ENCODE measurements at regions of chr19 and their contacts with region 1.

Region 1: GRCh38 chr19:20661150-20661819 is at the start of gene ZNF626:
- DNase-seq: peak; percentile 96
- ATAC-seq: peak; percentile 99
- H3K4me3 Mint-ChIP-seq: peak within 1 kb of the TSS; percentile 92
- H3K27ac Mint-ChIP-seq: peak within 1 kb of the TSS; percentile 95
- H3K4me1 Mint-ChIP-seq: peaks cover 33% of the 10 kb centered on the region
- H3K27me3 Mint-ChIP-seq: no peaks in the 10 kb centered on the region
- total RNA-seq, gene ZNF626: 8.0 to 13.3 TPM

Region 2: DNA sequence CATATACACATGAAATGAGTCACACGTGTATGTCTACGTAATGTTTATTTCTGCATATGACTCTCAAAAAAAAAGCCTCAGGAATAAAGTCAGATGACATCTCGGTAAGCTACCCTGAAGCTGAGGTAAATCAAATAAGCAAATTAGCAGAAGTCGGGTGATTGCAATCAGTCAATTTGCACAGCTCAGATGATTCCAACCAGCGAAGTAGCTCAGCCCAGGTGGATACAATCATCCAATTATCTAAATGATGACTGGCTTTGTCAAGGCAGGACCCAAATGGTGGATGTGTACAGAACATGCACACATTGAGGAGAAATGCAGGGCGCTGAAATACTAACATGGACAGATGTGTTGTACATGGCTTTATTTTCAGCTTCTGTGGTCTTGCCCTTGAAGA is 345.7 kb before region 1 on chr19:
- CTCF ChIA-PET with region 1: no interaction called
- POLR2A ChIA-PET with region 1: no interaction called
- intact Hi-C with region 1: no loop called
- DNase-seq: no peak
- ATAC-seq: no peak
- H3K4me3 Mint-ChIP-seq: no peak overlapping the region
- H3K27ac Mint-ChIP-seq: no peak overlapping the region
- H3K4me1 Mint-ChIP-seq: no peaks in the 10 kb centered on the region
- H3K27me3 Mint-ChIP-seq: no peaks in the 10 kb centered on the region

Region 3: GRCh38 chr19:20423381-20424197 is 237.7 kb before region 1 on chr19:
- CTCF ChIA-PET with region 1: no interaction called
- POLR2A ChIA-PET with region 1: interaction called, 3 read pairs
- intact Hi-C with region 1: loop called in 1 of 2 experiments (anchors 1 kb)
- DNase-seq: peak; percentile 61
- ATAC-seq: no peak
- H3K4me3 Mint-ChIP-seq: peak overlapping the region; percentile 96
- H3K27ac Mint-ChIP-seq: peak overlapping the region; percentile 99
- H3K4me1 Mint-ChIP-seq: peaks cover 9% of the 10 kb centered on the region
- H3K27me3 Mint-ChIP-seq: no peaks in the 10 kb centered on the region

Region 4: GRCh38 chr19:20923077-20923871 is 262.0 kb after region 1 on chr19 and contains the start of gene ZNF85:
- CTCF ChIA-PET with region 1: no interaction called
- POLR2A ChIA-PET with region 1: no interaction called
- intact Hi-C with region 1: loop called in 1 of 2 experiments (anchors 1 kb)
- DNase-seq: peak; percentile 95
- ATAC-seq: peak; percentile 99
- H3K4me3 Mint-ChIP-seq: peak within 1 kb of the TSS; percentile 91
- H3K27ac Mint-ChIP-seq: peak within 1 kb of the TSS; percentile 96
- H3K4me1 Mint-ChIP-seq: peaks cover 25% of the 10 kb centered on the region
- H3K27me3 Mint-ChIP-seq: no peaks in the 10 kb centered on the region
- total RNA-seq, gene ZNF85: 23.2 to 29.3 TPM

Region 5: GRCh38 chr19:21141787-21142464 is 480.6 kb after region 1 on chr19 and contains the start of gene ZNF431:
- CTCF ChIA-PET with region 1: no interaction called
- POLR2A ChIA-PET with region 1: no interaction called
- intact Hi-C with region 1: loop called in 1 of 2 experiments (anchors 2 kb)
- DNase-seq: peak; percentile 94
- ATAC-seq: peak; percentile 99
- H3K4me3 Mint-ChIP-seq: peak within 1 kb of the TSS; percentile 95
- H3K27ac Mint-ChIP-seq: peak within 1 kb of the TSS; percentile 96
- H3K4me1 Mint-ChIP-seq: peaks cover 38% of the 10 kb centered on the region
- H3K27me3 Mint-ChIP-seq: no peaks in the 10 kb centered on the region
- total RNA-seq, gene ZNF431: 16.8 to 22.2 TPM

Region 6: DNA sequence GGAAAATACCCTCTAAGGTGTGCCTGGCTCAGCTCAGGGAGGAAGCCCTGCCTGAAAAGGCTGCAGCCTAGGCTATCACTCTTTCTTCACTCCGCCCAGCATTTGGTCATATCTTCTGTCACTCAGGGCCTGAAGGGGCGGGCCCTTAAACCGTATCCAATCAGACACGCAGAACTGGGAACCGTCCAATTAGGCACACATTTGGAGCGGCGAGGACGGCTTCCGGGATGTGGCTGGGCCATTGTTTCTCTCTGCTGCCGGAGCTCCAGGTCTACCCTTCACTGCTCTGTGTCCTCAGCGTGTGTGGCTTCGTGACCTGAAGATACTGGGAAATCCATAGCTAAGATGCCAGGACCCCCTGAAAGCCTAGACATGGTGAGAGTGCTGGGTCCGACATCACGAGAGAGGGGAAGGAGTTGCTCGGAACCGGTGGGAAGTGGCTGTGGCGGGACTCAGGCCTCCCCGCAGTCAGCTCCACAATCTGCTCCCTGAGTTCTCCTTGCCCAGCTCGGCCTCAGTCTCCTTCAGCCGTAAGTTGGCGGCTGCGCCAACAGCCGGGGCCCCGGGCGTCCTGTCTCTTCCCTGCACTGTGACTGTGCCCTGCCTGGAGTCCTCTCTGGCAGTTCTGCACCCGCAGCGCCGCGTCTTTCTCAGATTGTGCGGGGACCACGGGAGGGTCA is 735.7 kb after region 1 on chr19 and contains the start of gene ZNF493:
- CTCF ChIA-PET with region 1: no interaction called
- POLR2A ChIA-PET with region 1: no interaction called
- intact Hi-C with region 1: loop called in 1 of 2 experiments (anchors 5 kb)
- DNase-seq: peak; percentile 95
- ATAC-seq: peak; percentile 100
- H3K4me3 Mint-ChIP-seq: peak within 1 kb of the TSS; percentile 98
- H3K27ac Mint-ChIP-seq: peak within 1 kb of the TSS; percentile 92
- H3K4me1 Mint-ChIP-seq: peaks cover 32% of the 10 kb centered on the region
- H3K27me3 Mint-ChIP-seq: no peaks in the 10 kb centered on the region
- total RNA-seq, gene ZNF493: 11.9 to 12.8 TPM

Measured in activated CD4-positive, alpha-beta T cell treated with anti-CD3 and anti-CD28 coated beads for 36 hours (primary cell).